ENCODE measurements at regions of chr14 and their contacts with region 1.

Region 1: DNA sequence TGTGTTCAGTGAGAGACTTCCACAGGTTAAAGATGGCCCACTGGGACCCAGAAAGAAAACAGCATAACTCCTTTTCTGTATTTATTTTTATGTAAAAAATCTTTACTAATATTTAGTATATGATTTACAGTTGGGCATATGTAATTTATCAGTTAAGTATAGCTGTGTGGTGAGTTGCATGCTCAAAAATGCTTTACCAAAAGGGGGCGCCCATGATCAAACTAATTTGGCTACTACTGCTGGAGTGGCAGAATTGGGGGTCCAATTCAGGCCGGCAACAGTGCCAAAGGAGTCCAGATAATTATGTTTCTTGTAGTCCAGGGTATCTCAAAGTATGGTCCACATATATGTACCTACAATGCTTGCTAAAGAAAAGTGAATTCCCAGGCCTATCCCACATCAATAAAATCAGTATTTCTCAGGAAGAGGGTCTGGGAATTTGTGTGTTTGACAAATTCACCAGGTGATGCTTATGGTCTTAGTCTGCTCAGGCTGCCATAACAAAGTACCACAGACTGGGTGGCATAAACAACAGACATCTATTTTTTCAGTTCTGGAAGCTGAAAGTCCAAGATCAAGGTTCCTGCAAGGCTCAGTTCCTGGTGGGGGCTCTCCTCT is 152.0 kb downstream of the KTN1 start:
- DNase-seq: peak; percentile 46
- H3K4me3 ChIP-seq: no peak overlapping the region
- H3K27ac ChIP-seq: no peak overlapping the region
- H3K4me1 ChIP-seq: no peaks in the 10 kb centered on the region
- H3K27me3 ChIP-seq: no peaks in the 10 kb centered on the region
- CTCF ChIP-seq: peak; percentile 52 to 58
- POLR2A ChIP-seq: no peak

Region 2: GRCh38 chr14:55721353-55721752 is 10.6 kb before region 1 on chr14:
- CTCF ChIA-PET with region 1: interaction called, 17 read pairs
- POLR2A ChIA-PET with region 1: no interaction called
- dilution Hi-C with region 1: no loop called
- intact Hi-C with region 1: no loop called
- DNase-seq: peak; percentile 60
- H3K4me3 ChIP-seq: no peak overlapping the region
- H3K27ac ChIP-seq: no peak overlapping the region
- H3K4me1 ChIP-seq: peaks cover 9% of the 10 kb centered on the region
- H3K27me3 ChIP-seq: no peaks in the 10 kb centered on the region
- CTCF ChIP-seq: peak in 1 of 2 donors; percentile 2
- POLR2A ChIP-seq: no peak

Region 3: DNA sequence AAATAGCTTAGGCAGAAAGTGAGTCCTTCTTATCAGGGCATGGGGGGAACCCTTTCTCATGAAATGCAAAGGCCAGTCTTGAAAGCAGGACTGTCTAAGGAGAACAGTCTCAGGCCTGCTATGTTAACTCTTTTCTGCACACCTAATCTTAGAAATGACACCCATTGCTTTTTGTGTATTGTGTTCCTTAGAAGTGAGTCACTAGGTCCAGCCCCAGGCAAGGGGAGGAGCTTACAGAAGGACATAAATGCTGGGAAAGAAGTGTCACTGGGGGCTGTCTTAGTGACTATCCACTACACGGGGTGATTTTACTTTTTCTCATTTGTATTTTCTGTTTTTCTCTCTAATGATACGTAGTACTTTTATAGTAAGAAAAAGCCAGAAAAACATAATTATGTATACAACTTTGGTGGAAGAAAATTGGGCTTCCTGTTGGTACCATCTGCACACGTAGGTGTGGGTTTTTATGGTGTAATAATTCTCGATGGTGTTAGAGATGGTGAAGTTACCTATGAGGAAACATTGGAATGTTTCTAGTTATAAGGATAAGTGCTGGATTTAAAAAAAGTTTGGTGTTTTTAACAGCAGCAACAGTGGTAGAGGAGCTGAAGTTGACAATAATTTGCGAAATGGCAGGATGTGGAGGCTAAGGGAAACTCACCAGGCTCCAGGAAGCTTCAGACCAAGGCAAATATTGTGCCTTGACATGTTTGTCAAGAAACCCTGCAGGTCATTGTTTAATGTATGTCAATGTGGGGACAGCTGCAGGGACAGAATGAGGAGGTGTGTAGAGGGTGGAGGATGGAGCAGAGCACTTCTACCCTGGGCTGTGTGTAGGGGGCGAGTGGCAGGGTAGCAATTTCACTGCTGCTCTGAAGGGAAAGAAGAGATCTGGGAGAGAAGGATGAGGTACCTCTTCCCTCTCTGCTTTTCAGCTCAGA is 62.9 kb after region 1 on chr14:
- CTCF ChIA-PET with region 1: interaction called, 13 read pairs
- POLR2A ChIA-PET with region 1: no interaction called
- dilution Hi-C with region 1: no loop called
- intact Hi-C with region 1: no loop called
- DNase-seq: peak; percentile 33
- H3K4me3 ChIP-seq: no peak overlapping the region
- H3K27ac ChIP-seq: no peak overlapping the region
- H3K4me1 ChIP-seq: peaks cover 25% of the 10 kb centered on the region
- H3K27me3 ChIP-seq: no peaks in the 10 kb centered on the region
- CTCF ChIP-seq: no peak
- POLR2A ChIP-seq: no peak

Region 4: DNA sequence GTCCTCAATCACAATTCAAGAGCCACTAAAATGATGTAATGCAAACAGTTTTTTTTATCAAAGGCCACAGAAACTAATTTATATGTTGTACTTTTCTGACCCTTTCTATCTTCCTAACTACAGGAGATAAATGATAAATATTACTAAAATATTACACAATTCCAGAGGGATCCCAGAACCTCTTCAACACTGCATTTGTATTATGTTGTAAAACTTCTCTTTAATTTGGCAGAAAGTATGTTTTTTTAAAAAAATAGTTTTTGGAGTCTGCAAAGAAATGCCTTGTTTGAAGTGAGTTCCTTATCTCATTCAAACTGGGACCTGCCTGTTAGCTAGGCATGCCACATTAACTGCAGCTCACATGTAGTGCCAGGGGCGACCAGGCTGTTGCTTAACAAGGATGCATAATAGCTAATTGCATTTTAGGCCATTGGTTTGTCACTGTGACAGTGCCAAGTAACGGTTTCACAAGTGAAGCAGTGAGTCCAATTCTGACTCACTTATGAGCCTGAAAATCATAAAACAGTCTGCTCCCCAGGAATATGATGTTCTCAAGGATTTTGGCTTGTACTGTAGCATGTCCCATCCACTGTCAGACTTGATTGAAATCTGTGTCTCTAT is 114.9 kb after region 1 on chr14:
- CTCF ChIA-PET with region 1: interaction called, 9 read pairs
- POLR2A ChIA-PET with region 1: no interaction called
- dilution Hi-C with region 1: no loop called
- intact Hi-C with region 1: loop called (anchors 5 kb)
- DNase-seq: no peak
- H3K4me3 ChIP-seq: no peak overlapping the region
- H3K27ac ChIP-seq: no peak overlapping the region
- H3K4me1 ChIP-seq: peaks cover 8% of the 10 kb centered on the region
- H3K27me3 ChIP-seq: no peaks in the 10 kb centered on the region
- CTCF ChIP-seq: no peak
- POLR2A ChIP-seq: no peak

Region 5: DNA sequence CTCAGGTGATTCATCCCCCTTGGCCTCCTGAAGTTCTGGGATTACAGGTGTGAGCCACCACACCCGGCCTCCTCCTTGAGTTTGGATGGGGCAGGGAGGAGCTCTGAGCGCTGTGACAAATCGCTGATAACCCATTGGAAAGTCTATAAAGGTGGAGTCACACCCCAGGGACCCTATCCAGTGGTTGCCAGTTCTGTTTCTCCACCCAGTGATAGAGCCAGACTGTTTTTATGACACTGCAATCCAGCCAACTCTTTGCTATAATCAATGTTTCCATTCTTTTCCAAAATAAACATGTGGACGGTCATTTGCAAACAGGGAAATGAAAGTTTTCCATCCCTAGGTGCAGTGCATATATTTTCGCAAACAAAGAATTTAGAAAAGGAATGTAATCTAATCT is 244.2 kb after region 1 on chr14:
- CTCF ChIA-PET with region 1: no interaction called
- POLR2A ChIA-PET with region 1: no interaction called
- dilution Hi-C with region 1: no loop called
- intact Hi-C with region 1: no loop called
- DNase-seq: peak; percentile 37
- H3K4me3 ChIP-seq: no peak overlapping the region
- H3K27ac ChIP-seq: no peak overlapping the region
- H3K4me1 ChIP-seq: no peaks in the 10 kb centered on the region
- H3K27me3 ChIP-seq: no peaks in the 10 kb centered on the region
- CTCF ChIP-seq: no peak
- POLR2A ChIP-seq: no peak

Region 6: GRCh38 chr14:56422703-56423213 is 690.8 kb after region 1 on chr14:
- CTCF ChIA-PET with region 1: interaction called, 25 read pairs
- POLR2A ChIA-PET with region 1: no interaction called
- dilution Hi-C with region 1: no loop called
- intact Hi-C with region 1: loop called (anchors 1 kb)
- DNase-seq: peak; percentile 84
- H3K4me3 ChIP-seq: no peak overlapping the region
- H3K27ac ChIP-seq: no peak overlapping the region
- H3K4me1 ChIP-seq: no peaks in the 10 kb centered on the region
- H3K27me3 ChIP-seq: no peaks in the 10 kb centered on the region
- CTCF ChIP-seq: peak; percentile 59 to 71
- POLR2A ChIP-seq: no peak

Region 7: DNA sequence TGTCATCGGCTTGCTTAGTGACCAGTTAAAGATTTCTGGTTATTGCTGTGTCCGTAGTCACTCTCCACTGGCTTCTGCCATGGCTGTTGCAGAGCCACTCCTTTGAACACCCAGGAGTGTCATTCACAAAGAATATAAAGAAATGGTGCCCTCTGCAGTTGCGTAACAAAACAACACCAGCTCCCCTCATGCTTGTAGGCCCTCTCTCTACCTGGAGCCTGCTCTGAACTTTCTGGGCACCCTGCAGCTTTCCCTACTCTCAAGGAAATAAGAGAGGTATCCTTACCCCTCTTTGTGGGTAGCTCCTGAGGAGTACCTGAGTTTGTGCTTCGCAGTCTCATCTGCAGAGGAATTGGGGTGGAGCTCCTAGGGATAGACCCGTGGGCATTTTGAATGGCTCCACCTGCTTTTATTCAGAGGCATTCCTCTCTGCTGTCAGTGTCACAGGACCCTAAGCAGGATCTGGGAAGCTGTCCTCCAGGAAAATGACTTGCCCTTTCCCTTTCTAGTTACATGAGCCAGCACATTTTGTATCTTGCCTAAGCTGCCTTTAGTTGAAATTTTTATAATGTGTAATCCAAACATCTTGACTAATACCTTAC is 750.4 kb after region 1 on chr14:
- CTCF ChIA-PET with region 1: interaction called, 11 read pairs
- POLR2A ChIA-PET with region 1: no interaction called
- dilution Hi-C with region 1: no loop called
- intact Hi-C with region 1: no loop called
- DNase-seq: peak; percentile 16
- H3K4me3 ChIP-seq: no peak overlapping the region
- H3K27ac ChIP-seq: no peak overlapping the region
- H3K4me1 ChIP-seq: no peaks in the 10 kb centered on the region
- H3K27me3 ChIP-seq: peaks cover 1 to 2% of the 10 kb centered on the region in 2 experiments
- CTCF ChIP-seq: peak; percentile 16 to 26
- POLR2A ChIP-seq: no peak